IMR-90 (cell line): ENCODE measurements at regions of chr14 and their contacts with region 1.

Region 1: DNA sequence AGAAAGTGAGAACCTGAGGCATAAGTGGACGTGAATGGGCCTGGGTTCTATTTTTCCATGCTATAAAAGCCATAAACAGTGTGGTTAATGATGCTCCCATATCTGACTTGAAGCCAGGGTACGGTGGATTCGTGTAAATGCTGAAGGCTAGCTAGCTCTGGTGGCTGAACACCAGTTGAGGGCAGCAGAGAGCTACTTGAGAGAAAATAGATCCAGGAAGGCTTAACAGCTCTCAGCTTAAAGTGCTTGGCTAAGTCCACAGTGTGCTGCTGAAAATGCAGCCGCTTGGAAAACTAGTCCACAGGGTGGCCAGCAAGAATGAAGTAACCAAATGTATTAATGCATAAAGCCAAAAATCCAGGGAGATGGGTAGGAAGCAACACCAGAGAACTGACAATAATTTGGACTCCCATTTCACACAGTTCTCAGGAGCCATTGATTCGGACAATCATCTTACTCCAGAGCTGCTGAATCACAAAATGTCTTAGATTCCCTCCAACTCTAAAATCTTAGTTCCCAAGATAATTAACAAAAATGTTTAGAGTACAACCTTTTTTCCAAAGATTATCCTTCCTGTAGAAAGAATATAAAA is 15.0 kb upstream of the FOXG1 start:
- DNase-seq: peak; percentile 49
- ATAC-seq: peak; percentile 85
- H3K4me3 ChIP-seq: no peak overlapping the region
- H3K27ac ChIP-seq: no peak overlapping the region
- H3K4me1 ChIP-seq: no peaks in the 10 kb centered on the region
- H3K27me3 ChIP-seq: peaks cover 21% of the 10 kb centered on the region
- CTCF ChIP-seq: peak; percentile 63
- POLR2A ChIP-seq: no peak
- RAD21 ChIP-seq: peak; percentile 61

Region 2: DNA sequence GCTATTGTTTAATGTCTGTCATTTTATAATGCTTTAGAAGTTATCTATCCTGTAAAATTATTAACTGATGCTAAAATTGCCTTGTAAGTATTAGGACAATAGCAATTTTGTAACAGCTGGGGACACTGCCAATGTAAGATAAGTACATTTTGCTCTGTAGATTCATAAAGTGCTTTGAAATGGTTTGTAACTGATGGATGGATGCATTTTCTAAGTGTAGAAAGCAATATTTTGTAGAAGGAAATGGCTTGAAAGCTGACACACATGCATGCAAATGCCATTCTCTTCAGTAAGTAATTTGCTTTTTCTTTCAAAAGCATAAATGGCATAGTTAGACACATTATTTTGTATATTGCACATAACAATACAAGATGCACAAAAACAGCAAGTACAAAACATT is 144.8 kb after region 1 on chr14:
- CTCF ChIA-PET with region 1: no interaction called
- POLR2A ChIA-PET with region 1: no interaction called
- dilution Hi-C with region 1: no loop called
- in situ Hi-C with region 1: no loop called
- intact Hi-C with region 1: no loop called
- DNase-seq: no peak
- ATAC-seq: no peak
- H3K4me3 ChIP-seq: no peak overlapping the region
- H3K27ac ChIP-seq: no peak overlapping the region
- H3K4me1 ChIP-seq: no peaks in the 10 kb centered on the region
- H3K27me3 ChIP-seq: no peaks in the 10 kb centered on the region
- CTCF ChIP-seq: no peak
- POLR2A ChIP-seq: no peak
- RAD21 ChIP-seq: no peak

Region 3: DNA sequence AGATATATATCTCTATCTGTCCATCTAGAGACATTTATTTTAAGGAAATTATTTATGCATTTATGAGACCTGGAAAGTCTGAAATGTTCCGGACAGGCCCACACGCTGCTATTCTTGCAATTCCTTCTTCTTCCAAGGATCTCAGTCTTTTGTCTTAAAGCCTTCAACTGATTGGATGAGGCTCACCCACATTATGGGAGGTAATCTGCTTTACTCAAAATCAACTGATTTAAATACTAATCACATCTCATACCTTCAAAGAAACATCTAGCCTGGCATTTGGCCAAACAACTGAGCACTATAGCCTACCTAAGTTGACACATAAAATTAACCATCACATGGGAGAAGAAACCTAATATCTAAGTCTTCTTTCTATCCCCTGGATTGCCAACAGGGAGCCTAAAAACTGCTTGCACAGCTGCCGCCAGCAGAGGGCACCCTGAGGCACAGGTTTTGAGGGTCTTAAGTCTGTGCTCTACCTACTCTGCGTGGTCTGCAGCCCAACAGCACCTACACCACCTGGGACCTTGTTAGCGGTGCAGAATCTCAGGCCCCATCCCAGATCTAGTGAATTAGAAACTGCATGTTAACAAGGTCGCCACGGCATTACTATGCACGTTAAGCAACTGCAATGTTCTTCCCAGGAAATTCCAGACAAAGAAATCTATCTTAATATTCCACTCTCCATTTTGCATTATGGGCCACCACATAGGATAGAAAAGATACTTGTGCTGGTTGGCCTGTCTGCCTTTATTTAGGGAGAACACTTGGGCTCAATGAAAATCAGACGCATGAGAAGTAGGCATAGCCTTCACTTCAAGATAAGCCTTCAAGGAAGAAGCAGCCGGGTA is 264.7 kb after region 1 on chr14:
- CTCF ChIA-PET with region 1: no interaction called
- POLR2A ChIA-PET with region 1: no interaction called
- dilution Hi-C with region 1: no loop called
- in situ Hi-C with region 1: no loop called
- intact Hi-C with region 1: loop called (anchors 5 kb)
- DNase-seq: peak; percentile 51
- ATAC-seq: peak; percentile 67
- H3K4me3 ChIP-seq: no peak overlapping the region
- H3K27ac ChIP-seq: no peak overlapping the region
- H3K4me1 ChIP-seq: no peaks in the 10 kb centered on the region
- H3K27me3 ChIP-seq: no peaks in the 10 kb centered on the region; the same call in 1 of the 2 replicates
- CTCF ChIP-seq: peak; percentile 74
- POLR2A ChIP-seq: no peak
- RAD21 ChIP-seq: peak; percentile 74

Region 4: GRCh38 chr14:29536886-29537511 is 785.4 kb after region 1 on chr14:
- CTCF ChIA-PET with region 1: interaction called, 6 read pairs
- POLR2A ChIA-PET with region 1: no interaction called
- dilution Hi-C with region 1: loop called (anchors 10 kb)
- in situ Hi-C with region 1: no loop called
- intact Hi-C with region 1: loop called (anchors 1 kb)
- DNase-seq: peak; percentile 35
- ATAC-seq: peak; percentile 60
- H3K4me3 ChIP-seq: no peak overlapping the region
- H3K27ac ChIP-seq: no peak overlapping the region
- H3K4me1 ChIP-seq: no peaks in the 10 kb centered on the region
- H3K27me3 ChIP-seq: peaks cover 8% of the 10 kb centered on the region
- CTCF ChIP-seq: peak; percentile 61
- POLR2A ChIP-seq: no peak
- RAD21 ChIP-seq: peak; percentile 53

Region 5: DNA sequence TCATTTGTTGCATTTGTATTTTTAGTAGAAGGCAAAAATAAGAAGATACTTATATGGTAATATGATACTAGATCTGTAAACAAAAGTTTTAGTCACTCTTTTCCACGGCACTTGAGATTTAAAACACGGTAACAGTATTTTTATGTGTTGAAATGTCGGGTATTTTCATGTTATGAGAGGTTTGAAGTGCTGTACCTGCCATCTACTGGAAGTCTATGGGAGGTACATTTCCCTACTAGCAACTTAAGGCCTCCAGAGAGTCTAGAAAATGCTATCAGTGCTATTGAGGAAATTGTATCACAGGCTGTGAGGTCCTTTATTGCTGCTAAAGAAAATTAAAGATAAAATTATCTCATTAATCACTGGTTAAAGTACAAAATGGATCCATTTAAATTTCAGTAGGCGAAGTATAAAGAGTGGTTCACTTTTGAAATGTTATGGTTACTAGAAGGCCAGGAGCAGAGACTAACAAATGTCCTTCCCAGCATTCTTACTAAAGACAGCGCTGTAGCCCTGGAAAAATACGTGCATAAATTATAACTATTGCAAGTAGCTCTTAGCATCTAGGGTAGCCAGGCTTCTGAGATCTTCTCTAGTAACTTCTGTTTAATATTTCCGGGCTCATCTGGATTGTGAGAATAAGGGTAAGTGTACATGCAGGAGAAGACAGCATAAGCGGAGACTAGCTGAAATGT is 1253.7 kb after region 1 on chr14:
- CTCF ChIA-PET with region 1: no interaction called
- POLR2A ChIA-PET with region 1: no interaction called
- dilution Hi-C with region 1: no loop called
- in situ Hi-C with region 1: loop called (anchors 25 kb)
- intact Hi-C with region 1: loop called (anchors 5 kb)
- DNase-seq: peak; percentile 89
- ATAC-seq: peak; percentile 98
- H3K4me3 ChIP-seq: no peak overlapping the region
- H3K27ac ChIP-seq: no peak overlapping the region
- H3K4me1 ChIP-seq: no peaks in the 10 kb centered on the region
- H3K27me3 ChIP-seq: no peaks in the 10 kb centered on the region
- CTCF ChIP-seq: peak; percentile 87
- POLR2A ChIP-seq: no peak
- RAD21 ChIP-seq: peak; percentile 91

Region 6: GRCh38 chr14:30270200-30271161 is 1518.9 kb after region 1 on chr14:
- CTCF ChIA-PET with region 1: interaction called, 5 read pairs
- POLR2A ChIA-PET with region 1: no interaction called
- dilution Hi-C with region 1: no loop called
- in situ Hi-C with region 1: no loop called
- intact Hi-C with region 1: loop called (anchors 1 kb)
- DNase-seq: peak; percentile 81
- ATAC-seq: peak; percentile 99
- H3K4me3 ChIP-seq: peak overlapping the region; percentile 41
- H3K27ac ChIP-seq: no peak overlapping the region
- H3K4me1 ChIP-seq: peaks cover 3% of the 10 kb centered on the region; the same call in 1 of the 2 replicates
- H3K27me3 ChIP-seq: no peaks in the 10 kb centered on the region
- CTCF ChIP-seq: peak; percentile 81
- POLR2A ChIP-seq: no peak
- RAD21 ChIP-seq: peak; percentile 66

Region 7: DNA sequence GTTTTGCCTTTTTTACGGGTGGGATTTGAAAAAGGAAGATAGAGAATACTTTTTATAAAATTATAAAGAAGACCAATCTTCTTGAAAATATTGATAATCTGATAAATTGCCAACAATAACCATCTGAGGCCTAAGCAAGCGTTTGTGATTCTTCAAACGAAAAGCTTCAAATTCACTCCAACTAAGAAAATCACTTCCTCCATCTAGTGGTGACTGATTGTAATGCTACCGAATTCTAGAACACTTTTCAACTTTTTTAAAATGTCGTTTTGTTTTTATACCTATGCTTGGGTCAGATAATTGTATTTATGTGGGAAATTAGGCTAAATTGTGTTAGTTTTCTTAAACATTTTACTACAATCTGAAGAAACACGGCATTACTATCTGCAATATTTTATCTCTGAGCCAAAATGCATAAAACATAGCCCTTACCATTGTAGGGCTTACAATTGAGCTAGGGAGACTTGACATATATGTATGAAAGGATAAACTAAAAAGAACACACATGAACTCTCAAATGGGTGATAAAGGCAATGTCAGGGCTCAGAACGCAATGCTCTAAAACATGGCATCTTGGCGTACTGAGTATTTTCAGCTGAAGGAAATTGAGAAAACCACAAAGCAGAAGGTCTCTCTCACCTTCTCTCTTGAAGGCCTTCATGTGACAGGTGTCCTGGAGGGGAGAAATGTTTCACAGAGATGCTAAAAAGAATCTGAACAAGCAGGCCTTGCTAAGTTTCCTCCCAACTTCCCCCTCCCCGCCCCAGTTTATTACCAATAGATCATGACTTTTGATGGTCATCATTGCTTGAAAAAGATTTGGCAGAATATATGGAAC is 1770.6 kb after region 1 on chr14:
- CTCF ChIA-PET with region 1: interaction called, 5 read pairs
- POLR2A ChIA-PET with region 1: no interaction called
- dilution Hi-C with region 1: no loop called
- in situ Hi-C with region 1: no loop called
- intact Hi-C with region 1: loop called (anchors 1 kb)
- DNase-seq: peak; percentile 51
- ATAC-seq: peak; percentile 85
- H3K4me3 ChIP-seq: no peak overlapping the region
- H3K27ac ChIP-seq: no peak overlapping the region
- H3K4me1 ChIP-seq: no peaks in the 10 kb centered on the region
- H3K27me3 ChIP-seq: no peaks in the 10 kb centered on the region; the same call in 1 of the 2 replicates
- CTCF ChIP-seq: peak; percentile 64
- POLR2A ChIP-seq: no peak
- RAD21 ChIP-seq: peak; percentile 44